HCT116 (cell line): ENCODE measurements at regions of chr5 and their contacts with region 1.

Region 1: GRCh38 chr5:45521067-45521466 is 175.1 kb downstream of the HCN1 start:
- DNase-seq: peak; percentile 62
- ATAC-seq: peak; percentile 94
- H3K4me3 ChIP-seq: no peak overlapping the region
- H3K27ac ChIP-seq: no peak overlapping the region; the same call in 1 of the 2 replicates
- H3K4me1 ChIP-seq: peaks cover 8 to 10% of the 10 kb centered on the region in 2 experiments; a peak in 3 of 4 replicates
- H3K27me3 ChIP-seq: no peaks in the 10 kb centered on the region
- CTCF ChIP-seq: peak; percentile 60 to 75 (median 66)
- POLR2A ChIP-seq: no peak
- RAD21 ChIP-seq: peak; percentile 88

Region 2: GRCh38 chr5:44862808-44863207 is 658.3 kb before region 1 on chr5:
- CTCF ChIA-PET with region 1: interaction called, 15 read pairs
- POLR2A ChIA-PET with region 1: no interaction called
- RAD21 ChIA-PET with region 1: no interaction called
- intact Hi-C with region 1: loop called (anchors 1 kb)
- DNase-seq: peak; percentile 41
- ATAC-seq: peak; percentile 63; the same call in 1 of the 2 replicates
- H3K4me3 ChIP-seq: no peak overlapping the region
- H3K27ac ChIP-seq: no peak overlapping the region
- H3K4me1 ChIP-seq: no peaks in the 10 kb centered on the region
- H3K27me3 ChIP-seq: no peaks in the 10 kb centered on the region
- CTCF ChIP-seq: peak; percentile 52 to 65 (median 57); a peak in 5 of 6 replicates
- POLR2A ChIP-seq: no peak
- RAD21 ChIP-seq: peak; percentile 84

Region 3: GRCh38 chr5:44935262-44935661 is 585.8 kb before region 1 on chr5:
- CTCF ChIA-PET with region 1: interaction called, 9 read pairs
- POLR2A ChIA-PET with region 1: no interaction called
- RAD21 ChIA-PET with region 1: interaction called in 1 of 2 experiments, 4 read pairs
- intact Hi-C with region 1: loop called (anchors 5 kb)
- DNase-seq: peak; percentile 48
- ATAC-seq: peak; percentile 77
- H3K4me3 ChIP-seq: no peak overlapping the region
- H3K27ac ChIP-seq: no peak overlapping the region
- H3K4me1 ChIP-seq: no peaks in the 10 kb centered on the region
- H3K27me3 ChIP-seq: no peaks in the 10 kb centered on the region
- CTCF ChIP-seq: peak; percentile 28 to 64 (median 64); a peak in 5 of 6 replicates
- POLR2A ChIP-seq: no peak
- RAD21 ChIP-seq: peak; percentile 68

Region 4: GRCh38 chr5:44952376-44952775 is 568.7 kb before region 1 on chr5:
- CTCF ChIA-PET with region 1: interaction called, 6 read pairs
- POLR2A ChIA-PET with region 1: no interaction called
- RAD21 ChIA-PET with region 1: interaction called in 1 of 2 experiments, 5 read pairs
- intact Hi-C with region 1: loop called (anchors 1 kb)
- DNase-seq: peak; percentile 51
- ATAC-seq: peak; percentile 74
- H3K4me3 ChIP-seq: no peak overlapping the region
- H3K27ac ChIP-seq: no peak overlapping the region
- H3K4me1 ChIP-seq: no peaks in the 10 kb centered on the region
- H3K27me3 ChIP-seq: no peaks in the 10 kb centered on the region
- CTCF ChIP-seq: peak; percentile 49 to 77 (median 76); a peak in 5 of 6 replicates
- POLR2A ChIP-seq: no peak
- RAD21 ChIP-seq: peak; percentile 57

Region 5: GRCh38 chr5:45440466-45440865 is 80.6 kb before region 1 on chr5:
- CTCF ChIA-PET with region 1: no interaction called
- POLR2A ChIA-PET with region 1: no interaction called
- RAD21 ChIA-PET with region 1: no interaction called
- intact Hi-C with region 1: no loop called
- DNase-seq: no peak
- ATAC-seq: no peak
- H3K4me3 ChIP-seq: no peak overlapping the region
- H3K27ac ChIP-seq: no peak overlapping the region
- H3K4me1 ChIP-seq: no peaks in the 10 kb centered on the region; a peak in 1 of 4 replicates
- H3K27me3 ChIP-seq: no peaks in the 10 kb centered on the region
- CTCF ChIP-seq: no peak
- POLR2A ChIP-seq: no peak
- RAD21 ChIP-seq: no peak

Region 6: DNA sequence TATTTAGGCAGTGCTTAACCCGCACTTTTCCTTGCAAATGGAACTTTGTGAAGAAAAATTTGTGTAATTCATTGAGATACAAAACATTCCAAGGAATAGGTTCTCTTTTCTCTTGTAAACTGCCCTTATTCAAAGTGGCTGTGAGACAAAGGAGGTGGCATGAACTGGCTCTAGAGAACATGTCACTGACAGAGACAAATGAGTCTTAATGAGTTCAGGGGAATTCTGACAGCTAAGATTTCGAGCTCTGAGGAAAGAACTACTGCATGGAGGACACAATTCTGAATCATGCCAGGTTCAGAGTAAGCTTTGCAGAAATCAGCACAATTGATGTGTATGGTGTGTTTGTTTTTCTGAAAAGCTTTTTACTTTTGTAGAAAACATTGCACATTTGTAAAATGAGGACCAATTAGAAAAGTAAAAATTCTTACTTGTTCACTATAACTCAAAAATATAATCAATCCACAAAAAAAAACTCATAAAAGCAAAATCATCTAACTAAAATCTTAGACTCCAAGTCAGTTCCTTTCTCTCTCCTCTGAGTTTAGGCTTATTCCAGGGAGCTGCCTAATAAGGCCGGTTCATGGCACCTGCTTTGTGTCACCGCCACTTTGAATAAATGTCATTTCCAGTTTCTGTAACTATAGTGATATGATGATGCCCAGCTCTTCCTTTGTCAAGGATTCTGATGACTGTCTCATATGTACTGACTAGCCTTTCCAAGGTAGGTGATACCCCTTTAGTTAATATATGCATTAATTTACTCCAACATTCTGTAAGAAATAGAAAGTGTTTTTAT is 12.0 kb after region 1 on chr5:
- CTCF ChIA-PET with region 1: no interaction called
- POLR2A ChIA-PET with region 1: no interaction called
- RAD21 ChIA-PET with region 1: no interaction called
- intact Hi-C with region 1: no loop called
- DNase-seq: no peak
- ATAC-seq: no peak
- H3K4me3 ChIP-seq: no peak overlapping the region
- H3K27ac ChIP-seq: no peak overlapping the region
- H3K4me1 ChIP-seq: no peaks in the 10 kb centered on the region
- H3K27me3 ChIP-seq: no peaks in the 10 kb centered on the region
- CTCF ChIP-seq: no peak
- POLR2A ChIP-seq: no peak
- RAD21 ChIP-seq: no peak

Region 7: DNA sequence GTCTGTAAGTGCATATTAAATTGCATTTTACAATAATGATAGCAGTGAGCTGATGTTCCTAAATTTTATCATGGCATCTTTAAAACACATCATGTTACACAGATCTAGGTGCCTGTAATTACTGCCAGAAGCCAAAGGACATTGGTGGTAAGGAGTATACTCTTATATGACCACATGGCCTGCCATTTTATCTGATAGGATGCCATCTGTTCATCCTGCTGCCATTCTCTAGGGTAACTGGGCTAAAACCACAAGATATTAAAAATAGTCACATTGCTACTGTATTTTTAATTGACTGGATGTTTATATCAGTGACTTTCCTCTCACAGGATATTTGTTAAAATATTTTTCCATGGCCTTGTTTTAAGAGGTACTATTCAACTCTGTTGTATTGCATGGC is 122.0 kb after region 1 on chr5:
- CTCF ChIA-PET with region 1: no interaction called
- POLR2A ChIA-PET with region 1: no interaction called
- RAD21 ChIA-PET with region 1: no interaction called
- intact Hi-C with region 1: no loop called
- DNase-seq: no peak
- ATAC-seq: no peak
- H3K4me3 ChIP-seq: no peak overlapping the region
- H3K27ac ChIP-seq: no peak overlapping the region
- H3K4me1 ChIP-seq: no peaks in the 10 kb centered on the region
- H3K27me3 ChIP-seq: no peaks in the 10 kb centered on the region
- CTCF ChIP-seq: no peak
- POLR2A ChIP-seq: no peak
- RAD21 ChIP-seq: no peak